ENCODE measurements at regions of chr16 and their contacts with region 1.

Region 1: DNA sequence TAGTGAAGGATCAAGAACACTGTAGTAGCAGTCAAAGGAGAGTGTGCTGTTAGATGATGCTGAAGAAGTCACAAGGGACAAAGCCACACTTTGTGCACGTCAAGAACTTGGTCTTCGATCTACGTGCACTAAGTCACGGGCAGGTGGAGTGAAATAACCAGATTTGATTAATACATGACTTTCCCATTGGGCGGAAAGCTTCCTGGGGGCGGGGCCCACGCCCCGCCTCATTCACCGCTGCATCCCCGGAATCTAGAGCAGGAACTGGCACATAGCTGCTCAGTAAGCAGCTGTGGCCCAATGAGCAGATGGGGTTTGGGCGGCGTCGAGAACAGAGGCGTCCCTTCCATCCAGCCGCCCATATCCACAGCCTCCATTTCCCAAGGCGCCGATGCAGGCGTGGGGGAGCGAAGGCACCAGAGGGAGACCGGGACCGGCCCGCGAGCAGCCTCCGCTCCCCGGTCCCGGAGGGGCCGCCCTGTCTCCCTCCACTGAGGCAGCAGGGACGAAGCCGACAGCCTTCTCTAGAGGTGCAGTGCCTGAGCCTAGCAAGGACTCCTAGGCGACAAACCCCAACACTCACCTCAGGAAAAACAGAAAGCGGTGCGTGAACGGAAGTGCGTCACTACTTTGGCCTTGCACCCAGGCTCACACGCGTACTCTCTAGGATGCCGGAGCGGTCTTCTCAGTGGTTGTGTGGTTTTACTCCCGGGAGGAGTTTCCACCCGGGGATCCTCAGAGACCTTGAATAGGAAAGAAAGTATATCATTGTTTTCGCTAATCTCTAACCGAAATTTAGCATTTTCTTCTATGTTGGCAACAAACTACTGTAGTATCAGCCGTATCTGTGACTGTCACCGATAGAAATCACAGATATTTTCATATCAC is 4.9 kb downstream of the ZNF19 start:
- DNase-seq: peak; percentile 86
- H3K4me3 Mint-ChIP-seq: peak overlapping the region; percentile 81
- H3K27ac Mint-ChIP-seq: peak overlapping the region; percentile 56
- H3K4me1 Mint-ChIP-seq: peaks cover 11% of the 10 kb centered on the region
- H3K27me3 Mint-ChIP-seq: no peaks in the 10 kb centered on the region
- CTCF ChIP-seq: no peak

Region 2: GRCh38 chr16:71214746-71215381 is 269.4 kb before region 1 on chr16:
- CTCF ChIA-PET with region 1: no interaction called
- intact Hi-C with region 1: no loop called
- DNase-seq: no peak
- H3K4me3 Mint-ChIP-seq: no peak overlapping the region
- H3K27ac Mint-ChIP-seq: no peak overlapping the region
- H3K4me1 Mint-ChIP-seq: no peaks in the 10 kb centered on the region
- H3K27me3 Mint-ChIP-seq: no peaks in the 10 kb centered on the region
- CTCF ChIP-seq: no peak

Region 3: GRCh38 chr16:71426072-71426879 is 58.0 kb before region 1 on chr16:
- CTCF ChIA-PET with region 1: no interaction called
- intact Hi-C with region 1: loop called (anchors 5 kb)
- DNase-seq: peak; percentile 78
- H3K4me3 Mint-ChIP-seq: peak overlapping the region; percentile 72
- H3K27ac Mint-ChIP-seq: peak overlapping the region; percentile 95
- H3K4me1 Mint-ChIP-seq: peaks cover 14% of the 10 kb centered on the region
- H3K27me3 Mint-ChIP-seq: peaks cover 71% of the 10 kb centered on the region
- CTCF ChIP-seq: no peak

Region 4: GRCh38 chr16:71449020-71449419 is 35.2 kb before region 1 on chr16:
- CTCF ChIA-PET with region 1: no interaction called
- intact Hi-C with region 1: no loop called
- DNase-seq: no peak
- H3K4me3 Mint-ChIP-seq: no peak overlapping the region
- H3K27ac Mint-ChIP-seq: no peak overlapping the region
- H3K4me1 Mint-ChIP-seq: no peaks in the 10 kb centered on the region
- H3K27me3 Mint-ChIP-seq: no peaks in the 10 kb centered on the region
- CTCF ChIP-seq: no peak

Region 5: GRCh38 chr16:71461686-71462648 is 22.3 kb before region 1 on chr16 and contains the start of gene ZNF23:
- CTCF ChIA-PET with region 1: interaction called, 9 read pairs
- intact Hi-C with region 1: loop called (anchors 1 kb)
- DNase-seq: peak; percentile 90
- H3K4me3 Mint-ChIP-seq: peak within 1 kb of the TSS; percentile 97
- H3K27ac Mint-ChIP-seq: peak within 1 kb of the TSS; percentile 97
- H3K4me1 Mint-ChIP-seq: peaks cover 19% of the 10 kb centered on the region
- H3K27me3 Mint-ChIP-seq: no peaks in the 10 kb centered on the region
- CTCF ChIP-seq: no peak
- total RNA-seq, gene ZNF23: 13.3 and 13.9 TPM in 2 replicates

Region 6: GRCh38 chr16:71537643-71538042 is 53.4 kb after region 1 on chr16:
- CTCF ChIA-PET with region 1: interaction called, 4 read pairs
- intact Hi-C with region 1: loop called (anchors 1 kb)
- DNase-seq: peak; percentile 78
- H3K4me3 Mint-ChIP-seq: no peak overlapping the region
- H3K27ac Mint-ChIP-seq: no peak overlapping the region
- H3K4me1 Mint-ChIP-seq: peaks cover 22% of the 10 kb centered on the region
- H3K27me3 Mint-ChIP-seq: no peaks in the 10 kb centered on the region
- CTCF ChIP-seq: peak; percentile 72

Measured in Calu3 (cell line).